ENCODE measurements at regions of chr10 and their contacts with region 1.

Region 1: DNA sequence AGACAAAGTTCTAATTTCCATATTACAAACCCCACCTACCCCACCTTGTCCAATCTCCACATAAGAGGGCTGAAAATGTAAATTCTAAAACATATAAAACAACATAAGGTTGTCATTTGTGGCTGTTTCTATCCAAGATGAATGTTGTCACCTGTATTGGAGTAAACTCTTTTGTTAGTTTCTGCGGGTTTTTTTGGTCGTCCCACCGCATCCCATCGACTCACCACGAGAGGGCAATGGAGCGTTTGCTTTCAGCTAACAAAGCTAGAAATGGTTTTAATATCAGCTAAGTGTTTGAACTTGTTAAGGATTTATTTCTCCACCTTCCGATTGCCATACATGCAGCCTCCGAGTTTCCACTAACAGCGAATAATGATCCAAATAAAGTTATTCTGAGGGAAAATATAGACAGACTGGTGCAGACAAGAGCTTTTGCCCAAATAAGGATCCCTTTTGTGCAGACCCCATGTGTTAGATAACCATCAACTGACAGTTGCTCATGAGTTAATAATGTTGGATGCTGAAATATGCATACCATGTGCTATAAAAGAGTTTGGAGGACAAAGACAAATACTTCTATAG is 137.2 kb downstream of the ARID5B start:
- DNase-seq: peak; percentile 38
- ATAC-seq: peak; percentile 75
- H3K4me3 ChIP-seq: no peak overlapping the region
- H3K27ac ChIP-seq: no peak overlapping the region
- H3K4me1 ChIP-seq: peaks cover 2 to 7% of the 10 kb centered on the region in 2 experiments; a peak in 2 of 4 replicates
- H3K27me3 ChIP-seq: no peaks in the 10 kb centered on the region
- CTCF ChIP-seq: peak; percentile 64 to 88 (median 81); a peak in 5 of 6 replicates
- POLR2A ChIP-seq: no peak
- RAD21 ChIP-seq: peak; percentile 85

Region 2: DNA sequence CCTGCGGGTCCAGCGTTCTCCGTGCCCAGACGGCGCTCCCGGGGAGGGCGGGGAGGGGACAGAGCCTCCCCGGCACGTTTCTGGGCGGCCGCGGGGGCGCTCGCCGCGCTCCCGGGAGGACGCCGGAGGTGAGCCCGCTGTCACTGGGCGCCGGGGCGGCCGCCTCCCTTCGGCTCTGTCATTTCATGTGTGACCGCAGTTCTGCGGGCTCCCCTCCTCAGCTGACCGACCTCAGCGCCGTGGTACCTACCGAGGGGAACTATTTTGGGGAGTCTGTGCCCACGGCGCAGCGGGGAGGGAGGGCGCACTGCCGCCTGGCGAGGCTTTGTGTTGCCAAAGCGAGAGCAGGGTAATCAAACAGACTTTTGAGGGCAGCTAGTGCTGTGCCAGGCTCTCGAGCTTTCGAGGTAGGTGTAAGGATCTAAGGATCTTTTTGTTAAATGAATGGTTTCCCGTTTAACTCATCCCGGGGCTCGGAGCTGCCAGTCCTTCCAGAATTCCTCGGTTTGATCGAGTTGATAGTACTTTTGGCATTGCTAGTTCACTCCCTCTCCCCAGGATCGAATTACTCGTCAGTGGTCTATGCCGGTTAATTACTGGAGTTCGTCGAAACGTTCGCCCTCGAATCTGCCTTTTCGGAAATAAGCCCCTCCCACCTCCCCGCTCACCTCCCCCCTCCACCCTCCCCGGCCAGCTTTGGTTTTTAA is 135.3 kb before region 1 on chr10:
- CTCF ChIA-PET with region 1: interaction called, 6 read pairs
- POLR2A ChIA-PET with region 1: no interaction called
- RAD21 ChIA-PET with region 1: no interaction called
- intact Hi-C with region 1: loop called (anchors 5 kb)
- DNase-seq: peak; percentile 42
- ATAC-seq: peak; percentile 64
- H3K4me3 ChIP-seq: peak overlapping the region; percentile 64 to 75
- H3K27ac ChIP-seq: peak overlapping the region; percentile 92
- H3K4me1 ChIP-seq: peaks cover 13 to 29% of the 10 kb centered on the region in 2 experiments; a peak in 3 of 4 replicates
- H3K27me3 ChIP-seq: no peaks in the 10 kb centered on the region
- CTCF ChIP-seq: peak in 2 of 3 experiments; percentile 23 to 24; a peak in 2 of 6 replicates
- POLR2A ChIP-seq: no peak
- RAD21 ChIP-seq: no peak

Region 3: DNA sequence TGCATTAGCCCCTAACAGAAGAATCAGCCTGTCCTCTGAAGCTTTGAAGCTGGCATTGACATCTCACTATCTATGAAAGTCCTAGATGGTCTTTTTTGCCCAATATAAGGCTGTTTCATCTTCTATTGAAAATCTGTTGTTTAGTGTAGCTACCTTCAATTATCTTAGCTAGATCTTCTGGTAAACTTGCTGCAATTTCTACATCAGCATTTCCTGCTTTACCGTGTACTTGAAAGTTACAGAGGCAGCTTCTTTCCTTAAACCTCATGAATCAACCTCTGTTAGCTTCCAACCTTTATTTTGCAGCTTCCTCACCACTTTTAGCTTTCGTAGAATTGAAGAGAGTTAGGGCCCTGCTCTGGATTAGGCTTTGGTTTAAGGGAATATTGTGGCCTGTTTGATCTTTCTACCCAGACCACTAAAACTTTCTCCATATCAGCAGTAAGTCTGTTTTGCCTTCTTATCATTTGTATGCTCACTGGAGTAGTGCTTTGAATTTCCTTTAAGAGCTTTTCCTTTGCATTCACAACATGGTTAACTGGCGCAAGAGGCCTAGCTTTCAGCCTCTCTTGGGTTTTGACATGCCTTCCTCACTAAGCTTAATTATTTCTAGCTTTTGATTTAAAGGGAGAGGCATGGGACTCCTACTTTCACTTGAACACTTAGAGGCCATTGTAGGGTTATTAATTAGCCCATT is 104.7 kb before region 1 on chr10:
- CTCF ChIA-PET with region 1: no interaction called
- POLR2A ChIA-PET with region 1: no interaction called
- RAD21 ChIA-PET with region 1: no interaction called
- intact Hi-C with region 1: no loop called
- DNase-seq: no peak
- ATAC-seq: no peak
- H3K4me3 ChIP-seq: no peak overlapping the region
- H3K27ac ChIP-seq: no peak overlapping the region
- H3K4me1 ChIP-seq: peaks cover 5 to 24% of the 10 kb centered on the region in 2 experiments
- H3K27me3 ChIP-seq: no peaks in the 10 kb centered on the region
- CTCF ChIP-seq: no peak
- POLR2A ChIP-seq: no peak
- RAD21 ChIP-seq: no peak

Region 4: DNA sequence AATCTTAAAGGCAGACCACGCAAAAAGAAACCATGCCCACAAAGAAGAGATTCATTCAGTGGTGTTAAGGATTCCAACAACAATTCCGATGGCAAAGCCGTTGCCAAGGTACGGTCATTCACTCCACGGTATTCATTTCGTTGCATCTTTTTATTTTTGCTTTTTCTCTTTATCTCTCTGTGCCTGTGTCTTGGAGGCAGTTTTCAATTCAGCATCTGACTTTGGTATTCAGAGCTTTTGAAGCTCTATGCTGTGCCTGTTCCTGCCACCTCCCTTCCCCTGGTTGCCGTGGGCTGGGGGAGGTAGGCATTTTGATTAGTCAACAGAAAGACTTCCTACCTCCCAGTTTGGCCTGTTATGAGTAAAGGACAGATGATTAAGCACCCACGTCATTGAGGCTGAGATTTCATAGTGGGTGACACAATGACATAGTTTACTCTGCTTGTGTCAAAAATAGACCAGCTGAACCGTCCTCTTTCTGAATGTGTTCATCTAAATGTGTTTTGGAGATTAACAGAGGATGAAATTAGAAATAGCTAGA is 12.3 kb after region 1 on chr10:
- CTCF ChIA-PET with region 1: interaction called, 13 read pairs
- POLR2A ChIA-PET with region 1: no interaction called
- RAD21 ChIA-PET with region 1: no interaction called
- intact Hi-C with region 1: no loop called
- DNase-seq: peak; percentile 32
- ATAC-seq: no peak
- H3K4me3 ChIP-seq: no peak overlapping the region
- H3K27ac ChIP-seq: no peak overlapping the region
- H3K4me1 ChIP-seq: peaks cover 0 to 18% of the 10 kb centered on the region in 2 experiments; a peak in 3 of 4 replicates
- H3K27me3 ChIP-seq: no peaks in the 10 kb centered on the region
- CTCF ChIP-seq: no peak
- POLR2A ChIP-seq: no peak
- RAD21 ChIP-seq: no peak

Region 5: DNA sequence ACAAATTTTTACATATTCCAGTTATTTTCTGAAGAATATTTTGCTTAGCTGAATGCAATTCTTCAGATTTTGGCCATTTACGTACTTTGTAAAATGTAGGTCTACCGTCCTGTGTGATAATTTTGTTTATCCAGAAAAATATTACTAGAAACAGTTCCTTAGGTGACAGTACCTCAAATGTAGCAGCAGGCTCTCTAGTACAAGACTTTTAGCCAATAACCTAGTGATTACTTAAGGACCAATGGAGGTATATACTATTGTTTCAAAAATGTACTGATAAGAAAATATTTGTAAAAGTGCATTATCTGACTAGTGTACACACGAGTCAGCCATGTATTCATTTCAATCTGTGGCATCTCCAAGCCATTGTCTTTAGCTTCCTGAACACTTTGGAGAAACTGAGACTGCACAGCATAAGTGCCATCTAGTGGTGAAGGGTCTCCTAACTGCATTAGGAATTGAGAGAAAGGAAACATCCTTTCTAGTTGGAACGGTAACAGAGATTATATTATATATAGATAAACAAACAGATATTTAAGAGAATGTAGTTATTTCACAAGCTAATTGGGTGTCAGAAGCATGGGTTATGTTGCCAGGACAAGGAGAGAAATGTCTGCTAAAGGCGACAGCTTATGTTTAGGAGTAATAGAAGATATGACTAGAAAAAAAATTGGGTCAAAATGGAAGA is 206.2 kb after region 1 on chr10:
- CTCF ChIA-PET with region 1: interaction called, 78 read pairs
- POLR2A ChIA-PET with region 1: no interaction called
- RAD21 ChIA-PET with region 1: interaction called, 5 to 12 read pairs
- intact Hi-C with region 1: loop called (anchors 1 kb)
- DNase-seq: peak; percentile 53
- ATAC-seq: peak; percentile 84
- H3K4me3 ChIP-seq: no peak overlapping the region
- H3K27ac ChIP-seq: no peak overlapping the region
- H3K4me1 ChIP-seq: peaks cover 6 to 13% of the 10 kb centered on the region in 2 experiments
- H3K27me3 ChIP-seq: no peaks in the 10 kb centered on the region
- CTCF ChIP-seq: peak; percentile 83 to 91 (median 83)
- POLR2A ChIP-seq: no peak
- RAD21 ChIP-seq: peak; percentile 86

Region 6: GRCh38 chr10:62399211-62399610 is 360.5 kb after region 1 on chr10:
- CTCF ChIA-PET with region 1: no interaction called
- POLR2A ChIA-PET with region 1: no interaction called
- RAD21 ChIA-PET with region 1: no interaction called
- intact Hi-C with region 1: no loop called
- DNase-seq: no peak
- ATAC-seq: no peak
- H3K4me3 ChIP-seq: no peak overlapping the region
- H3K27ac ChIP-seq: no peak overlapping the region
- H3K4me1 ChIP-seq: no peaks in the 10 kb centered on the region
- H3K27me3 ChIP-seq: no peaks in the 10 kb centered on the region
- CTCF ChIP-seq: no peak
- POLR2A ChIP-seq: no peak
- RAD21 ChIP-seq: no peak

Region 7: DNA sequence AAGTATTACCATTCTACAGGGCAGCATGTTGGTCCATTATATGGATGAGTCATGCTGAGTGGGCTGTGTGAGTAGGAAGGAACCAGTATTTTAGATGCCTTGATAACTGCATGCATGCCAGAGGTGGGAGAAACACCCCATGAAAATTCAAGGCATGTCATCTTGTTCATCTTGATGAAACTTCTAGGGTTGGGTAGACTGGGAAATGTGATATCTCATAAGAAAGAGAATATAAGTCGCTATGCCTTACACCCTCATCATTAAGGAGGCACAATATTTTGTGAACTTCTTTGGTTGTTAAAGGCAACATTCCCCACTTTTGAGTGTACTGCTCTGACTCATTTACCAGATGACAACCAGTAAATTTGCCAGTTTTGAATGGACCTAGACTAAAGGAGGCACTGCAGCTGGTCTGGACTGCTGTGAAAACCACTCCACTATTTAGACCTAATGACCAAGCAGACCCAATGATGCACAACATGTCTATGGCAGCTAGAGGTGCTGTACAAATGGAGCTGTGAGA is 383.4 kb after region 1 on chr10:
- CTCF ChIA-PET with region 1: interaction called, 4 read pairs
- POLR2A ChIA-PET with region 1: no interaction called
- RAD21 ChIA-PET with region 1: interaction called in 1 of 2 experiments, 3 read pairs
- intact Hi-C with region 1: loop called (anchors 10 kb)
- DNase-seq: no peak
- ATAC-seq: no peak
- H3K4me3 ChIP-seq: no peak overlapping the region
- H3K27ac ChIP-seq: no peak overlapping the region
- H3K4me1 ChIP-seq: peaks cover 4 to 31% of the 10 kb centered on the region in 2 experiments; a peak in 3 of 4 replicates
- H3K27me3 ChIP-seq: no peaks in the 10 kb centered on the region
- CTCF ChIP-seq: no peak
- POLR2A ChIP-seq: no peak
- RAD21 ChIP-seq: no peak